ENCODE measurements at regions of chr10 and their contacts with region 1.

Region 1: DNA sequence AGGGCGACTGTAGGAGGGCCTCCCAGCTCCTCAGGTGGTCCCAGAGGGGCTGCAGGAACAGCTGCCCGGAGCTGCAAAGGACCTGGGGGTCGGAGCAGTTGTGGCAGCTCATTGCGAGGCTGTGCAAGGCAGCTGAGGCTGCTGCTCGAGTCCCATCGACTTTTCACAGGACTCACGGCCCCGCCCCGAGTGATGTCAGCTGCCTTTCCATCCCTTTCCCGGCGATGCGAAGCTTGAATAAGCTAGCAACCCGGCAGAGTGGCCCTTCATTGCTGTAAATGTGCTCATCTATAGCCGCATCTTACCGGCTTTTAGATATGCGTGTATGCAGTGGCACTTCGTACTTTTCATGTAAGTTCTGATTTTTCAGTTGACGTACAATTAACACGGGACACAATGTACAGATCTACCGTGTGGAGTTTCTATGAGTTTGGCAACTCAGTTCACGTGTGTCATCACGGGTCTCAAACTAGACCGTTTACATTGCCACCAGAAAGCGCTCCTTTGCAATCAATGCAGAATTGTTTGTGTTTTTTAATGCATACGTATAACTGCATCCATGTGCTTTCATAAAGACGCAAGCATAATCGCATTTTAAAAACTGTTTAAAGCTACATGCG is at the start of gene CH25H:
- DNase-seq: no peak
- ATAC-seq: peak; percentile 59
- H3K4me3 ChIP-seq: peak within 1 kb of the TSS; percentile 66
- H3K27ac ChIP-seq: no peak within 1 kb of the TSS
- H3K4me1 ChIP-seq: peaks cover 24% of the 10 kb centered on the region
- H3K27me3 ChIP-seq: peaks cover 6 to 22% of the 10 kb centered on the region in 2 experiments
- CTCF ChIP-seq: no peak
- EP300 ChIP-seq: no peak
- POLR2A ChIP-seq: no peak
- RAD21 ChIP-seq: no peak
- polyA plus RNA-seq, gene CH25H: not detected

Region 2: DNA sequence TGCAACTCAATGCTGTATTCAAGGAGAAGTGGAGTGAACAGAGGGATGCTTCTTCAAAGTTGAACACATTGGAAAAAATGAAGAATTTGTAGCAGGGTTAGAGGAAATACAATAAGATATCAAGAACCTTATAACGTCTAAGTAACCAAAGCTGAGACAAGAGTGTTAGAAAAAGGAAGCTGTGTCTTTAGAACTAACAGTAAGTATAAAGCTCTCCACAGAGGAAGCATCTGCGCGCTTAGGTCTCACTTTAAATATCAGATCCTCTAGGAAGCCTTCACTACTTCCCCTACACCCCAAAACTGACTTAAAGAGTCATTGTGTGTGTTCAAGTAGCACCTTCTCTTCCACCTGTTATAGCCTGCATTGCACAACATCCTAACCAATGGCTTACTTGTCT is 43.2 kb before region 1 on chr10:
- CTCF ChIA-PET with region 1: interaction called, 4 read pairs
- POLR2A ChIA-PET with region 1: no interaction called
- RAD21 ChIA-PET with region 1: no interaction called
- SMC1A ChIA-PET with region 1: interaction called, 3 read pairs
- in situ Hi-C with region 1: no loop called
- intact Hi-C with region 1: loop called (anchors 2 kb)
- DNase-seq: no peak
- ATAC-seq: peak; percentile 24
- H3K4me3 ChIP-seq: peak overlapping the region; percentile 43; the same call in 1 of the 2 replicates
- H3K27ac ChIP-seq: no peak overlapping the region
- H3K4me1 ChIP-seq: peaks cover 26% of the 10 kb centered on the region
- H3K27me3 ChIP-seq: no peaks in the 10 kb centered on the region
- CTCF ChIP-seq: no peak
- EP300 ChIP-seq: no peak
- POLR2A ChIP-seq: no peak
- RAD21 ChIP-seq: no peak

Measured in GM12878 (cell line).